Activated CD8-positive, alpha-beta T cell treated with anti-CD3 and anti-CD28 coated beads, Interleukin-2, amount 10 ng/mL, durations not matched to agents 7 days and 5 days (primary cell): ENCODE measurements at regions of chr1 and their contacts with region 1.

Region 1: DNA sequence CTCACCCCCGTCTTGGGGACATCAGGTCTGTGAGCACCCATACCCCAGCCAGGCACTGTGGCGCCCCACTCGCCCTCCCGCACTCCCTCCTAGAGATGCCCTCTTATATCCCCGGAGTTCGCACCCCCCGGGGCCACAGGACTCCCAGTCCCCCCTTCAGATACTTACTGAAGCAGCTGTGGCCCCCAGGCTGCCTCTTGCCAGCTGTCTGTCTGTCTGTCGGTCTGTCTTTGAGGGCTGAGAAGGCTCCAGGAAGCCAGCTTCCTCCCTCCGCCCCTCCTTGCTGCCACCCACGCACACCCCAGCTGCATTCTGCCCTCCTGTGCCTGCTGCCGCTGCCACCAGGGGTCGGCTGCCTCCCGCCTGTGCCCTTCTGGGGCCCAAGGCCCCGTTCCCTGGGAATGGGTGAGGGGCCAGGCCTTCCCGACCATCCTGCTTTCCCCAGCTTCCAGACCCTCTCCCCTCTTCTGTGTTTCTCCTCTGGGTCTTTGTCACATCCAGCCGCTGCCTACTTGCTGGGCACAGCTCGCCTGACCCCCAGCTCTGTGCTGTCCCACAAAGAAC is at the start of gene PTPN7:
- DNase-seq: peak; percentile 82
- ATAC-seq: peak; percentile 54
- H3K4me3 Mint-ChIP-seq: peak within 1 kb of the TSS; percentile 91
- H3K27ac Mint-ChIP-seq: peak within 1 kb of the TSS; percentile 100
- H3K4me1 Mint-ChIP-seq: peaks cover 83% of the 10 kb centered on the region
- H3K27me3 Mint-ChIP-seq: no peaks in the 10 kb centered on the region
- total RNA-seq, gene PTPN7: 242 to 255 TPM

Region 2: DNA sequence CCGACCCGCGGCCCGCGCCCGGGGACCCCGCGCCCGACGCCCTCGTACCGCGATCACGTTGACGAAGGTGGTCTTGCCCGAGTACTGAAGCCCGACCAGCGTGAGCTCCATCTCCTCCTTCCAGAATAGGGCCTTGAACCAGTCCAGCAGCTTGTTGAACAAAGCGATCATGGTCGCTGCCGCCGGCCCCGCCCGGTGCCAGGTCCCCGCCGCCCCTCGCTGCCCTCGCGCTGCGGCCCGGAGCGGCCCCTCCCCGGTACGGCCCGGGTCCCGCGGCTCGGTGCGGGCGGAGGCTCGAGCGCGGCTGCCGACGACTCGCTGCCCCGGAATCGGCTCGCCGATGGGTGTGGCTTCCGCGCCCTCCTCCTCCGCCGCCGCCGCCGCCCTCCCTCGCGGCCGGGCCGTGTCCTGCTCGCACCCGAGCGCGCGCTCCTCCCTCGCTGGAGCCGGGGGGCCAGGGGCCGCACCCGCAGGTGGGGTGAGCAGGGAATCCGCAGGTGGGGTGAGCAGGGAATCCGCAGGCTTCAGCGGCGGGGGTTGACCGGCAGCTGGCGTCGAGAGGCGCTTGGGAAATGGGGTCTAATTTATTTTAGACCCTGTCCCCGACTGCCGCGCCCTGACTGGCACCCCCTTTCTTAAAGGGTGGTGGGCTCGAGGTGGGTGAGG is 15.9 kb before region 1 on chr1 and contains the start of gene ARL8A:
- CTCF ChIA-PET with region 1: interaction called, 39 read pairs
- POLR2A ChIA-PET with region 1: interaction called, 103 read pairs
- DNase-seq: peak; percentile 74
- ATAC-seq: peak; percentile 85
- H3K4me3 Mint-ChIP-seq: peak within 1 kb of the TSS; percentile 98
- H3K27ac Mint-ChIP-seq: peak within 1 kb of the TSS; percentile 94
- H3K4me1 Mint-ChIP-seq: peaks cover 28% of the 10 kb centered on the region
- H3K27me3 Mint-ChIP-seq: no peaks in the 10 kb centered on the region
- total RNA-seq, gene ARL8A: 39.7 to 42.0 TPM

Region 3: GRCh38 chr1:202170726-202171125 is 10.3 kb after region 1 on chr1:
- CTCF ChIA-PET with region 1: interaction called, 31 read pairs
- POLR2A ChIA-PET with region 1: interaction called, 15 read pairs
- DNase-seq: peak; percentile 43
- ATAC-seq: peak; percentile 49
- H3K4me3 Mint-ChIP-seq: no peak overlapping the region
- H3K27ac Mint-ChIP-seq: no peak overlapping the region
- H3K4me1 Mint-ChIP-seq: peaks cover 23% of the 10 kb centered on the region
- H3K27me3 Mint-ChIP-seq: no peaks in the 10 kb centered on the region

Region 4: GRCh38 chr1:202184750-202185460 is 24.4 kb after region 1 on chr1:
- CTCF ChIA-PET with region 1: interaction called, 29 read pairs
- POLR2A ChIA-PET with region 1: interaction called, 4 read pairs
- DNase-seq: peak; percentile 73
- ATAC-seq: peak; percentile 66
- H3K4me3 Mint-ChIP-seq: no peak overlapping the region
- H3K27ac Mint-ChIP-seq: no peak overlapping the region
- H3K4me1 Mint-ChIP-seq: peaks cover 25% of the 10 kb centered on the region
- H3K27me3 Mint-ChIP-seq: no peaks in the 10 kb centered on the region